ENCODE measurements at regions of chr2 and their contacts with region 1.

Region 1: GRCh38 chr2:68121873-68122679 is 35.6 kb upstream of the PNO1 start:
- DNase-seq: peak; percentile 63 to 86 (median 74)
- ATAC-seq: peak; percentile 56
- H3K4me3 ChIP-seq: no peak overlapping the region
- H3K4me3 Mint-ChIP-seq: no peak overlapping the region
- H3K27ac ChIP-seq: no peak overlapping the region
- H3K27ac Mint-ChIP-seq: no peak overlapping the region
- H3K4me1 ChIP-seq: peaks cover 4% of the 10 kb centered on the region
- H3K4me1 Mint-ChIP-seq: peaks cover 5% of the 10 kb centered on the region
- H3K27me3 ChIP-seq: no peaks in the 10 kb centered on the region
- H3K27me3 Mint-ChIP-seq: no peaks in the 10 kb centered on the region
- CTCF ChIP-seq: peak; percentile 99

Region 2: DNA sequence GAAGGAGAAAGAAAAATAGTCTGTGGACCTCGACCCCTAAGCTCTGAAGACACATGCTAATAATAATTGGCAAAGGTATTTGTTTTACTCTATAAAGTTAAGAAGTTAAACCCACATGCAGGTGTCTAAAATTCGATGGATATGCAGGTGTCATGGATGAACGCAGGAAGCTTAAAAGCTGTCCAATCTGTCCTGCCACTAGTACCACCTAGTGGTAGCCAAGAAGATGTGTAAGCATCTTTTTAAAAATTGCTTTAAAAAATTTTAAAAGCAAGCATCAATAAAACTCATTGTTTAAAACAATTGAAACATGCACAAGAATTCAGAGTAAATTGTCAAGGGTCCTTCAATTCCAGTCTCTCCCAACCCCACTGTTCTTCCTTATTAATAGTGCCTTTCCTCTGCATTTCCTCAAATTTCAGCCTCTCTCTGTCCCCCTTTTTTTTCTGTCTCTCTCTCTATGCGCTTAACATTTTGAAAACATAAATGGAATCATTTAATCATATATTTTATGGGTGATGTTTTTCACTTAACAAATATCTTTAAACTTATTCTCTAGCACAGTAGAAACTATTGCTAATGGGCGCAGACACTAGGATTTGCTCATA is 160.8 kb after region 1 on chr2:
- CTCF ChIA-PET with region 1: interaction called, 19 read pairs
- POLR2A ChIA-PET with region 1: interaction called, 4 read pairs
- intact Hi-C with region 1: loop called (anchors 1 kb)
- DNase-seq: peak in 8 of 14 experiments; percentile 3 to 74 (median 24)
- ATAC-seq: peak; percentile 73
- H3K4me3 ChIP-seq: no peak overlapping the region
- H3K4me3 Mint-ChIP-seq: no peak overlapping the region
- H3K27ac ChIP-seq: no peak overlapping the region
- H3K27ac Mint-ChIP-seq: no peak overlapping the region
- H3K4me1 ChIP-seq: no peaks in the 10 kb centered on the region
- H3K4me1 Mint-ChIP-seq: no peaks in the 10 kb centered on the region
- H3K27me3 ChIP-seq: peaks cover 0 to 4% of the 10 kb centered on the region in 2 experiments
- H3K27me3 Mint-ChIP-seq: peaks cover 36% of the 10 kb centered on the region
- CTCF ChIP-seq: peak; percentile 83

Region 3: DNA sequence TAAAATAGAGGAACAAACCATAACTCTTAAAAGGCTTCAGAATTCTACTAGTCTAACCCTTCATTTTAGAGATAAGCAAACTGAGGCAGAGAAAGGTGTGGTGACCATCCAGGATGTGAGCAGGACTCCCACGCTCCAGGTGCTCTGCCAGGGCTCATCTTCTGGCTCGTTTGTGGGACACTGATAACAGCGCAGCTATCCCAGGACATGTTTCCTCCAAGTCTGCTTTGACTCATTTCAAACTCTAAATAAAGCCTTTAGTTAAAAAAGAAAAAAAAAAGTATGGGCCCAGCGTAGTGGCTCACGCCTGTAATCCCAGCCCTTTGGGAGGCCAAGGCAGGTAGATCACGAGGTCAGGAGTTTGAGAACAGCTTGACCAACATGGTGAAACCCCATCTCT is 169.2 kb after region 1 on chr2:
- CTCF ChIA-PET with region 1: interaction called, 10 read pairs
- POLR2A ChIA-PET with region 1: no interaction called
- intact Hi-C with region 1: loop called in 1 of 2 experiments (anchors 1 kb)
- DNase-seq: no peak
- ATAC-seq: no peak
- H3K4me3 ChIP-seq: no peak overlapping the region
- H3K4me3 Mint-ChIP-seq: no peak overlapping the region
- H3K27ac ChIP-seq: no peak overlapping the region
- H3K27ac Mint-ChIP-seq: no peak overlapping the region
- H3K4me1 ChIP-seq: no peaks in the 10 kb centered on the region
- H3K4me1 Mint-ChIP-seq: no peaks in the 10 kb centered on the region
- H3K27me3 ChIP-seq: peaks cover 0 to 4% of the 10 kb centered on the region in 2 experiments
- H3K27me3 Mint-ChIP-seq: peaks cover 20% of the 10 kb centered on the region
- CTCF ChIP-seq: no peak